Astrocyte of the cerebellum (primary cell): ENCODE measurements at regions of chr22 and their contacts with region 1.

Region 1: DNA sequence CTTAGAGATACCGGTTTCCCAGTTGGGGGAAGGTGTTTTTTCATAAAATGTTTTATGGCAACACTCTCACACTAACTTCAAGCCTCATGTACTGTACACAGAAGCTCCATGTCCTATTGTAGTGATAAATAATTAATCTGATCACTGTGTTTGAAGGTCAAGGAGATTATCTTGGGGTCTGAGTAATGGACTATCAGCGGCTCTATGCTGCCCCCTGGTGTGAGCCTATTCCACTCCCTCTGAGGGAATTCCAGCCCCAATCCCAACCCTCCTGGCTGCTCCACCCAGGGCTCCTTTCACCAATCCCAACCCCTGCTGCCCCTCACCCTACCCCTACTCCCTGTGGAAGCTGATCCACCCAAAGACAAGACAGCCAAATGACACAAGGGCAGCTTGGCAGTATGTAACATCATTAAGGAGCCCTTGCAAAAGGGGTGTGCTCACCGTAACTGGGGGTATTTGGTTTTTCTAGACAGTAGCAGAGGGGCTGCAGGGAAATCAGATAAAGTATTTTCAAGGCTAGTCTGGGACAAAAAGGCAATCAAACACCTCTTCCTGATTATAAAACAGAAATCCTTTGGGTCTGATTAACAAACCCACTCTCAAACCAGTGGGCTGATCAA is 22.3 kb downstream of the HPS4 start:
- DNase-seq: no peak
- H3K4me3 ChIP-seq: no peak overlapping the region
- CTCF ChIP-seq: peak; percentile 86

Region 2: GRCh38 chr22:26364066-26365015 is 97.0 kb before region 1 on chr22:
- in situ Hi-C with region 1: loop called (anchors 10 kb)
- DNase-seq: peak; percentile 68
- H3K4me3 ChIP-seq: no peak overlapping the region
- CTCF ChIP-seq: peak; percentile 78